Testis (tissue), 5 donors: ENCODE measurements at regions of chr22 and their contacts with region 1.

Region 1: GRCh38 chr22:20156611-20157429 is 6.0 kb upstream of the CCDC188 start:
- DNase-seq: peak; percentile 95
- H3K4me3 ChIP-seq: no peak overlapping the region
- H3K27ac ChIP-seq: no peak overlapping the region
- H3K4me1 ChIP-seq: peaks cover 4% of the 10 kb centered on the region
- H3K27me3 ChIP-seq: no peaks in the 10 kb centered on the region
- CTCF ChIP-seq: peak; percentile 99 to 100 (median 100)
- POLR2A ChIP-seq: no peak

Region 2: GRCh38 chr22:20205964-20206708 is 49.3 kb after region 1 on chr22:
- intact Hi-C with region 1: no loop called
- DNase-seq: peak; percentile 79
- H3K4me3 ChIP-seq: peak overlapping the region; percentile 53 to 68
- H3K27ac ChIP-seq: peak overlapping the region; percentile 35 to 75
- H3K4me1 ChIP-seq: peaks cover 24% of the 10 kb centered on the region
- H3K27me3 ChIP-seq: no peaks in the 10 kb centered on the region
- CTCF ChIP-seq: no peak
- POLR2A ChIP-seq: no peak

Region 3: DNA sequence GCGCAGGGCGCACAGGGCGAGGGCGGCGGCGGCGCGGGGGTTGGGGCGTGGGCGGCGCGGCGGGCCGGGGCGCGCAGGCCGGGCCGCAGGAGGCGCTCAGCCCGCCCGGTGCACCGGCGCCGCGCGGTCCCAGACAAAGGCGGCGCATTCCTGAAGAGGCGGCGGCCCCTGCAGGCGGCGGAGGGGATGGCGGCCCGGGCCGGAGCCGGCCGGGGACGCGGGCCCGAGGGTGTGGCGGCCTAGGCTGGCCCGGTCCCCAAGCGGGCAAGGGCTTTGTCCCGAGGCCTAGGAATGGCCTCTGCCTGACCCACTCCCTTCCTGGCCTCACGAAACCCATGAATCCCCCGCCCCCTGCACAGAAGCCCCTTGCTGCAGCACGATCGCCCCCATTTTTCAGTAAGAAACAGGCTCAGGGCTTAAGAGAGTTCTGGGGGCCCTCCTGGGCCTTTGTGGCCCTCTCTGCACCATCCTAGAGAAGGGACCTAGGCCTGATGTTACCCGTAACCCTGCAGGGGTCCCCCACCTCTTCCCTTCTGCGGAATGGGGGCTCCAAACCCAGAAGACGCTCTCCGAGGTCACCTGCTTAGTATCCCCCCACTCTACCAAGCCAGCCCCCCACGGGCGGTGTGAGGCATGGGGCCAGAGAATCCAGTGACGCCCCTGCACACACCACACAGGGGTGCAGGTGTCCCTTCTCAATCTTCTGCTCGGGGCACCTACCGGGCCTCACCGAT is 111.6 kb after region 1 on chr22 and contains the start of gene RTN4R:
- intact Hi-C with region 1: loop called (anchors 5 kb)
- DNase-seq: peak; percentile 47
- H3K4me3 ChIP-seq: peak within 1 kb of the TSS; percentile 37 to 43
- H3K27ac ChIP-seq: no peak within 1 kb of the TSS
- H3K4me1 ChIP-seq: peaks cover 4% of the 10 kb centered on the region
- H3K27me3 ChIP-seq: no peaks in the 10 kb centered on the region
- CTCF ChIP-seq: peak; percentile 60 to 87 (median 64)
- POLR2A ChIP-seq: no peak
- total RNA-seq, gene RTN4R: 5.1 to 6.1 TPM

Region 4: DNA sequence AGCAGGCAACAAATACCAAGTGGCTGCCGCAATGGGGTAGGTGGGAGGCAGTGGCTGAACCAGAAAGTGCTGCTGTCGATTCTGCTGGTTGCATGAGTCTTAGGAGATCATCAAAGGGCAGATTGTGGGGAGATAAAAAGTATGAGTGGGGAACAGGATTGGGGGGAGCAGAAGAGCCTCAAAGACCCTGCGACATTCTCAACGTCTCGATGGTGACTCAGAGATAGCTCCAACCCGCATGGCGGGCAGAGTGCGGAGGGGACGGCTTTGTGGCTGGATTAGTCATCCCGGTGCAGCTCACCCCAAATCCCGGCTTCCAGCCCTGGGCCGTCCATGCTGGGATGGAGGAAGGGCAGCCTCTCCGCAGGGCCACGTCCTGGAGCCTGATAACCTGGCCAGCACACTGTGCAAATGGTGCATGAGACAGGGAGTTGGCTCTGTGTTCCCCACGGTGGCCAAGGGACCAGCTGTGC is 122.9 kb after region 1 on chr22:
- intact Hi-C with region 1: loop called (anchors 5 kb)
- DNase-seq: no peak
- H3K4me3 ChIP-seq: no peak overlapping the region
- H3K27ac ChIP-seq: no peak overlapping the region
- H3K4me1 ChIP-seq: no peaks in the 10 kb centered on the region
- H3K27me3 ChIP-seq: no peaks in the 10 kb centered on the region
- CTCF ChIP-seq: no peak
- POLR2A ChIP-seq: no peak